ENCODE measurements at regions of chr15 and their contacts with region 1.

Region 1: DNA sequence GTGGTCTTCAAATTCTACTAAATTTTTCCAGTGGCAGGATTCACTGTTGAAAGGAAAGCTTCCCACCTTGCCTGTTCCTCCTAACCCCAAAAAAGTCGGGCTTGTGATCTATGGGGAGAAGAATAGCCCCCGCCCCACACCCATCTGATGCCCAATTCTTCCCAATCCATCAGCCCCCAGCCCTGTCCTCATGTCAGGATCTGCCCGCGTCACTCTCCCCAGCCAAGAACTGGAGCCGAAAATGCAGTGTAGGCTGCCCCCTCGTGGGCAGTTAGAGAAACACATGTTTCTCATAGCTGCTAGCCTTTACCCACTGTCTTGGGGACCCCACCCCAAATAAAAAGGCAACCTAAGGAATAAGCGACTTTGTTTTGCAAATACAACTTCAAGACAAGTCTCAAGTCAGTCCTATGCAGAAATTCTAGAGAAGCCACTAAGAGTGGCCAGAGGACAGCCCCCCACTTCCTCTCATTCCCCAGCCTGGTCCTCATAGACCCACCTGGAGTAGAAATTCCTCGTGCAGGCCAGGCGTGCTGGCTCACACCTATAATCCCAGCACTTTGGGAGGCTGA is 13.0 kb upstream of the CSK start:
- DNase-seq: peak in 6 of 9 experiments; percentile 58 to 77 (median 70)
- ATAC-seq: peak; percentile 65
- H3K4me3 ChIP-seq: no peak overlapping the region
- H3K4me3 Mint-ChIP-seq: no peak overlapping the region
- H3K27ac ChIP-seq: no peak overlapping the region
- H3K27ac Mint-ChIP-seq: no peak overlapping the region
- H3K4me1 ChIP-seq: peaks cover 17% of the 10 kb centered on the region
- H3K4me1 Mint-ChIP-seq: peaks cover 21% of the 10 kb centered on the region
- H3K27me3 ChIP-seq: no peaks in the 10 kb centered on the region
- H3K27me3 Mint-ChIP-seq: peaks cover 4% of the 10 kb centered on the region
- CTCF ChIP-seq: peak; percentile 71

Region 2: GRCh38 chr15:74635228-74635627 is 133.6 kb before region 1 on chr15:
- CTCF ChIA-PET with region 1: interaction called, 730 read pairs
- POLR2A ChIA-PET with region 1: interaction called, 4 read pairs
- intact Hi-C with region 1: loop called (anchors 1 kb)
- DNase-seq: peak; percentile 53 to 84 (median 73)
- ATAC-seq: peak; percentile 95
- H3K4me3 ChIP-seq: no peak overlapping the region
- H3K4me3 Mint-ChIP-seq: no peak overlapping the region
- H3K27ac ChIP-seq: peak overlapping the region in 1 of 2 experiments; percentile 36
- H3K27ac Mint-ChIP-seq: no peak overlapping the region
- H3K4me1 ChIP-seq: peaks cover 6% of the 10 kb centered on the region
- H3K4me1 Mint-ChIP-seq: peaks cover 5% of the 10 kb centered on the region
- H3K27me3 ChIP-seq: no peaks in the 10 kb centered on the region
- H3K27me3 Mint-ChIP-seq: no peaks in the 10 kb centered on the region
- CTCF ChIP-seq: peak; percentile 82

Region 3: DNA sequence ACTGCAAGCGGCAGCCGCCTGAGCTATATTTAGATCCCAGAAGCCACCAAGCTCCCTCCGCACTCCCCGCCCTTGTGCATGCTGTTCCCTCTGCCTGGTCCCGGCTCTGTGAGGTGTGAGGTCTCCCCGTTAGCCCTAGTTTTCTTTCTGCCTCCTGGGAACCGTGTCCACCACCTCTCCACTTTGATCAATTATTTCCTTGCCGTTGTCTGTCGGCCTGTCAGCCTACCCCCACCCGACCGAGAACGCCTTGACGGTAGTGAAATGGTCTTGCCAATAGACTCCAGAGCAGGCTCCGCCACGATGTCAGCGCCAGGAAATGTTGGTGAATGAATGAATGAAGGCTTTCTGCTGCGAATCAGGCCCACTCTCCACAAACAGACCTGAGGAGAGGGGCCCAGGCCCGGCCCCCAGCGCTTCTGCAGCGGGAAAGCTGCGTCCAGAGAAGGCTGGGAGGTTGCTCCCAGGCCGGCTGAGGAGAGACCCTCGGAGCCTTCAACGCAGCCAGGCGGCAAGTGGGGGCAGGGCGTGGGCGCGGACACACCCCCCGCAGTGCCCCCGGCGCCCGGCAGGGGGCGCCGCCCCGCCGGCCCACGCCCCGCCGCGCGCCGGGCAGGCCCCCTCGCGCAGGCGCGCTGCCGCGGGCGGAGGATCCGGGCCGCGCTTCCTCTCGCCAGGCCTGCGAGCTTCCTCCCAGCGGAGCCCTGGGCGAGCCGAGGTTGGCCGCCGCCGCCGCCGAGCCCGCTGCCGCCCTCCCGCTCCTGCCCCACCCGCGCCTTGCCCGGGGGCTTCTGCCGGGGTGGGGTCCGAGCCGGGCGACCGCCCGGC is 12.8 kb after region 1 on chr15 and contains the start of gene CSK:
- CTCF ChIA-PET with region 1: interaction called, 1,956 read pairs
- POLR2A ChIA-PET with region 1: interaction called, 512 read pairs
- intact Hi-C with region 1: loop called in 1 of 2 experiments (anchors 1 kb)
- DNase-seq: peak; percentile 56 to 92 (median 79)
- ATAC-seq: peak; percentile 63
- H3K4me3 ChIP-seq: peak within 1 kb of the TSS; percentile 93 to 98
- H3K4me3 Mint-ChIP-seq: peak within 1 kb of the TSS; percentile 85
- H3K27ac ChIP-seq: peak within 1 kb of the TSS; percentile 74 to 90
- H3K27ac Mint-ChIP-seq: peak within 1 kb of the TSS; percentile 93
- H3K4me1 ChIP-seq: peaks cover 70% of the 10 kb centered on the region
- H3K4me1 Mint-ChIP-seq: peaks cover 66% of the 10 kb centered on the region
- H3K27me3 ChIP-seq: no peaks in the 10 kb centered on the region
- H3K27me3 Mint-ChIP-seq: no peaks in the 10 kb centered on the region
- CTCF ChIP-seq: peak; percentile 56
- total RNA-seq, gene CSK: 99.5 to 118 TPM

Region 4: GRCh38 chr15:74799856-74800547 is 31.1 kb after region 1 on chr15:
- CTCF ChIA-PET with region 1: interaction called, 1,956 read pairs
- POLR2A ChIA-PET with region 1: interaction called, 512 read pairs
- intact Hi-C with region 1: loop called (anchors 1 kb)
- DNase-seq: peak; percentile 74 to 94 (median 87)
- ATAC-seq: peak; percentile 95
- H3K4me3 ChIP-seq: no peak overlapping the region
- H3K4me3 Mint-ChIP-seq: peak overlapping the region; percentile 42
- H3K27ac ChIP-seq: peak overlapping the region; percentile 36 to 94
- H3K27ac Mint-ChIP-seq: peak overlapping the region; percentile 92
- H3K4me1 ChIP-seq: peaks cover 56% of the 10 kb centered on the region
- H3K4me1 Mint-ChIP-seq: peaks cover 56% of the 10 kb centered on the region
- H3K27me3 ChIP-seq: no peaks in the 10 kb centered on the region
- H3K27me3 Mint-ChIP-seq: no peaks in the 10 kb centered on the region
- CTCF ChIP-seq: peak; percentile 92

Region 5: DNA sequence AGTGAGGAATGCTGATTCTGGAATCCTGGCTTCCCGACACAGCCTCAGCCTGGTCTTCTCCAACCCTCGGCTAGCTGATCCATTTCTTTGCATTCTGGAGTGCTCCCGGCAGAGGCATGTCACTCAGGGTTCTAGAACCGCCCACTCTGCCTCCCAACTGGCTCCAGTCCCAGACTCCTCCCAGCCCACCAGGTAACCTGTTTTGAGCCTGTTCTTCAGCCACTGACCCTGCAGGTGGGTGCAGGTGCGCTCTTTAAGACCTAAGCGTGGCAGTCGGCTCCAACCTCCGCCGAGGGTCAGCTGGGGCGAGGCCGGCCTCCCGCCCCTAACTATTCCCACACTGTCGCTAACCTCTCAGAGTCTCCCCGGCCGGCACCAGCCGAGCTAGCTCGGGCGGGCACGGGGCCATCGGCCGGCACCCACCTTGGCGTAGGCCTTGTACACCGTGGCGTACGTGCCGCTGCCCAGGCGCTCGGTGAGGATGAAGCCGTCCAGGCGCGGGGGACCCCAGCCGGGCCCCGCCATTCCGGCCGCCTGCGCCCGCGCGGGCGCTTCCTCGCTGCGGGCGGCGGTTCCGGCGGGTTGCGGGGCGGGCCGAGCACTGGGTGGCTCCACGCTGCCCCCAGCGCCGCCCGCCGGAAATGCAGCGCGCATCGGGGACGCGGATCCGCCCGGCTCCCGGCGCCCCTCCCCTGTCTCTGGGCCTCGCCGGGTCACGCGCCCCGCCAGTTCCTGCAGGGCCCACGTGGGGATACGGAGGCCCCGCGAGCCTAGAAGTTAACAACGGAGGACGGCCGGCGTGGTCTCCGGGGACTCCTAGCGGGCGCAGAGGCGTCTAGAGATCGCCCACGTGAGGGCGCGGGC is 74.0 kb after region 1 on chr15 and contains the start of gene ULK3:
- CTCF ChIA-PET with region 1: interaction called, 26 read pairs
- POLR2A ChIA-PET with region 1: interaction called, 9 read pairs
- intact Hi-C with region 1: loop called in 1 of 2 experiments (anchors 2 kb)
- DNase-seq: peak; percentile 88 to 96 (median 92)
- ATAC-seq: peak; percentile 92
- H3K4me3 ChIP-seq: peak within 1 kb of the TSS; percentile 90 to 97
- H3K4me3 Mint-ChIP-seq: peak within 1 kb of the TSS; percentile 91
- H3K27ac ChIP-seq: peak within 1 kb of the TSS; percentile 72 to 78
- H3K27ac Mint-ChIP-seq: peak within 1 kb of the TSS; percentile 93
- H3K4me1 ChIP-seq: peaks cover 43% of the 10 kb centered on the region
- H3K4me1 Mint-ChIP-seq: peaks cover 48% of the 10 kb centered on the region
- H3K27me3 ChIP-seq: no peaks in the 10 kb centered on the region
- H3K27me3 Mint-ChIP-seq: no peaks in the 10 kb centered on the region
- CTCF ChIP-seq: peak; percentile 71
- total RNA-seq, gene ULK3: 34.3 to 35.1 TPM

Region 6: DNA sequence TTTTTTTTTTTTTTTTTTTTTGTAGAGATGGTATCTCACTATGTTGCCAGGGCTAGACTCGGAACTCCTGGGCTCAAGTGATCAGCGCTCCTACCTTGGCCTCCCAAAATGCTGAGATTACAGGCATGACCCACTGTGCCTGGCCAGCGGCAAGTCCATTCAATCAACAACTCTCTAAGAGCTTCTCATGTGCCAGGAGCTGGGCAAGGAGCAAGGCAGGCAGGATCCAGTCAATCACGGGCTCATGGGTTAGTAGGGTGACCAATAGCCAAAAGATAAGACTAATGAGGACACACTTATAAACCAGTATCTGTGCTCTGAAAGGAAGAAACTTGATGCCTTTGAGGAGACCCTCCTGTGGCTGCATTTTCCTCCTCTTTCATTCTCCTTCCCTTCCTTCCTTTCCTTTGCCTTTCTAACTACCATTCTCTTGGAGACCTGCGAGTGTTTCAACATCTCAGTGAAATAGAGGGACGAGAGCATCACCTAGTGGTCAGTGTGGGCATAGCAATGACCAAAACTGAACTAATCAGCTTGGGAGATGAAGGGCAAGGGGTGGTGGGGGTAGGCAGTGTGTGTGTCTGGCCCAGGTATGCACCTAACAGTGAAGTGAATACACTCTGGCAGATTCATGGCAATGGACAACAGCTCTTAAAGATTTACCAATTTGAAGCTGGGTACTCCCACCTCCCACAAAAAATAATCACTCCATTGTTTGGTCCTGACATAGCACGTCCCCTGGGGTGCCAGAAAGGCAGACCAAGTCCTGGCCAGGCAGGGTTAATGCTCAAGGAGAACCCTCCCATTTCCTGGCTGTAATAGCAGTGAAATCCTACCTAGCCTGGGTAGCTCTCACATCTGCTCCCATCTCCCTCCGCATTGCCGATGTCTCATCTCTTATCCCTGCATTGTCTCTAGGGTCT is 181.5 kb after region 1 on chr15:
- CTCF ChIA-PET with region 1: interaction called, 103 read pairs
- POLR2A ChIA-PET with region 1: no interaction called
- intact Hi-C with region 1: loop called (anchors 1 kb)
- DNase-seq: peak; percentile 65 to 84 (median 79)
- ATAC-seq: peak; percentile 99
- H3K4me3 ChIP-seq: no peak overlapping the region
- H3K4me3 Mint-ChIP-seq: no peak overlapping the region
- H3K27ac ChIP-seq: no peak overlapping the region
- H3K27ac Mint-ChIP-seq: no peak overlapping the region
- H3K4me1 ChIP-seq: no peaks in the 10 kb centered on the region
- H3K4me1 Mint-ChIP-seq: peaks cover 6% of the 10 kb centered on the region
- H3K27me3 ChIP-seq: peaks cover 0 to 2% of the 10 kb centered on the region in 2 experiments
- H3K27me3 Mint-ChIP-seq: no peaks in the 10 kb centered on the region
- CTCF ChIP-seq: peak; percentile 94

Region 7: GRCh38 chr15:75161917-75162414 is 393.1 kb after region 1 on chr15:
- CTCF ChIA-PET with region 1: no interaction called
- POLR2A ChIA-PET with region 1: no interaction called
- intact Hi-C with region 1: no loop called
- DNase-seq: no peak
- ATAC-seq: no peak
- H3K4me3 ChIP-seq: no peak overlapping the region
- H3K4me3 Mint-ChIP-seq: no peak overlapping the region
- H3K27ac ChIP-seq: no peak overlapping the region
- H3K27ac Mint-ChIP-seq: no peak overlapping the region
- H3K4me1 ChIP-seq: no peaks in the 10 kb centered on the region
- H3K4me1 Mint-ChIP-seq: no peaks in the 10 kb centered on the region
- H3K27me3 ChIP-seq: no peaks in the 10 kb centered on the region
- H3K27me3 Mint-ChIP-seq: peaks cover 2% of the 10 kb centered on the region
- CTCF ChIP-seq: no peak

Region 8: DNA sequence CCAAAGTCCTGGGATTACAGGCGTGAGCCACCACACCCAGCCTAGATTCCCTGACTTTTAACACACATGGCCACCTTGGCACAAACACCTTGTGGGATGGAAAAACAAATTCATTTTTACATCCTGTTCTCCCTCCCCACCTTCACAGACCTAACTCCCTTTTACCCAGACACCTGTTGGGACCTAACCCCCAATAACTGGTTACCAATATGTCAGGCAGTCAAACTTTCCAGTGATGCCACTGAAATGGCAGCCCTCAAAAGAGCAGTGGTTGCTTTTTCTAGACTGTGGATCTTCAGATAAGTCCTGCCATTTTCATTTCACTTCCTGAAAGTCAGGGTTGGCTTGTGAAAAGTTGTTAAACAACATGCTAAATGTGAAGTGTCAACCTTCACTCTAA is 647.7 kb after region 1 on chr15:
- CTCF ChIA-PET with region 1: no interaction called
- POLR2A ChIA-PET with region 1: no interaction called
- intact Hi-C with region 1: no loop called
- DNase-seq: no peak
- ATAC-seq: no peak
- H3K4me3 ChIP-seq: no peak overlapping the region
- H3K4me3 Mint-ChIP-seq: no peak overlapping the region
- H3K27ac ChIP-seq: no peak overlapping the region
- H3K27ac Mint-ChIP-seq: no peak overlapping the region
- H3K4me1 ChIP-seq: no peaks in the 10 kb centered on the region
- H3K4me1 Mint-ChIP-seq: peaks cover 17% of the 10 kb centered on the region
- H3K27me3 ChIP-seq: no peaks in the 10 kb centered on the region
- H3K27me3 Mint-ChIP-seq: no peaks in the 10 kb centered on the region
- CTCF ChIP-seq: no peak

Region 9: DNA sequence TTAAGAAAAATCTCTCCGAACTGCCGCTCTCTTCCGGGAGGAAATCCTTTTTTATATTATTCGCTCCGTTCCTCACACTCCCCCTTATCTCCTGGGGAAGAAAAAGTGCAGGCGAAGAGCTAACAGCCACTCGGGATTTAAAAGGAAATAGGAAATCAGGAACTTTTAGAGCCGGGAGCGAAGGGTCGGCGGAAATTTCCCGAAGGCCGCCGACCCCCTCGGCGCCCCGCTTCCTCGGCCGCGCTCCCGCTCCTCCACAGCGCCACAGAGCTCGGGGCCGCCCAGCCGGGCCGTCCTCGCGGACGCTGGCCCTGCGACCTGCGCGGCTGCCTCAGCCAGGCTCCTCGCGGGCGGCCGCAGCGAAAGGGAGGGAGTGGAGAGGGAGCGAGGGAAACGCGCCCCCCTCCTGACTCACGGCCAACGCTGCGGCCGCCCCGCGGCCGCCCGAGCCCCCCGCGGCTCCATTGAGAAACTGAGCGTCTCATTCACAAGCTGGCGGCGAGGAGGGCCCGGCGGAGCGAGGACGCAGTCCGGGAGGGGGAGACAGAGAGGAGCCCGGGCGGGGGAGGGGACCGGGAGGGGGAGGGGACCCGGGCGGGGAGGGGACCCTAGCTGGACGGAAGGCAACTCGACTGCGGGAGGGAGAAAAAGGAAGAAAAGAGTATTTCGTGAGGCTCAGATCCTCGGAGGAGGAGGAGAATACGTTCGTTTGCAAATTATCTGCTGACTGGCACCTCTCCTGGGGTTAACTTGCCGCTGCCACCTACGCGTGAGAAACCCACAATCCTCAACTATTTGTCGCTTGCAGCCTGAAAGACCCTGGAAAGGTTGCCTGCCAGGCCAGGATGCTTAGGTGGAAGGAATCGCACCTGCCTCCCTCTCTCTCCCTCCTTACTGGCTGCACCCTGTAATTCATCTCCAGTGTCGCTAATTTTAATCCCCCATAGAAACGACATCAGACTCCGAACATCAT is 810.4 kb after region 1 on chr15 and contains the start of gene PTPN9:
- CTCF ChIA-PET with region 1: no interaction called
- POLR2A ChIA-PET with region 1: no interaction called
- intact Hi-C with region 1: no loop called
- DNase-seq: peak; percentile 24 to 81 (median 68)
- ATAC-seq: peak; percentile 83
- H3K4me3 ChIP-seq: peak within 1 kb of the TSS; percentile 77 to 83
- H3K4me3 Mint-ChIP-seq: peak within 1 kb of the TSS; percentile 94
- H3K27ac ChIP-seq: peak within 1 kb of the TSS; percentile 25 to 73
- H3K27ac Mint-ChIP-seq: peak within 1 kb of the TSS; percentile 86
- H3K4me1 ChIP-seq: peaks cover 14% of the 10 kb centered on the region
- H3K4me1 Mint-ChIP-seq: peaks cover 23% of the 10 kb centered on the region
- H3K27me3 ChIP-seq: no peaks in the 10 kb centered on the region
- H3K27me3 Mint-ChIP-seq: no peaks in the 10 kb centered on the region
- CTCF ChIP-seq: peak; percentile 43
- total RNA-seq, gene PTPN9: 4.8 to 5.6 TPM

Region 10: GRCh38 chr15:75801859-75802593 is 1033.2 kb after region 1 on chr15:
- CTCF ChIA-PET with region 1: no interaction called
- POLR2A ChIA-PET with region 1: no interaction called
- intact Hi-C with region 1: no loop called
- DNase-seq: peak; percentile 53 to 86 (median 78)
- ATAC-seq: peak; percentile 100
- H3K4me3 ChIP-seq: no peak overlapping the region
- H3K4me3 Mint-ChIP-seq: peak overlapping the region; percentile 58
- H3K27ac ChIP-seq: no peak overlapping the region
- H3K27ac Mint-ChIP-seq: no peak overlapping the region
- H3K4me1 ChIP-seq: peaks cover 5% of the 10 kb centered on the region
- H3K4me1 Mint-ChIP-seq: peaks cover 3% of the 10 kb centered on the region
- H3K27me3 ChIP-seq: peaks cover 0 to 10% of the 10 kb centered on the region in 2 experiments
- H3K27me3 Mint-ChIP-seq: peaks cover 31% of the 10 kb centered on the region
- CTCF ChIP-seq: peak; percentile 75

Measured in CD8-positive, alpha-beta T cell (primary cell).